Left lung (tissue), 14 donors: ENCODE measurements at regions of chr1 and their contacts with region 1.

Region 1: DNA sequence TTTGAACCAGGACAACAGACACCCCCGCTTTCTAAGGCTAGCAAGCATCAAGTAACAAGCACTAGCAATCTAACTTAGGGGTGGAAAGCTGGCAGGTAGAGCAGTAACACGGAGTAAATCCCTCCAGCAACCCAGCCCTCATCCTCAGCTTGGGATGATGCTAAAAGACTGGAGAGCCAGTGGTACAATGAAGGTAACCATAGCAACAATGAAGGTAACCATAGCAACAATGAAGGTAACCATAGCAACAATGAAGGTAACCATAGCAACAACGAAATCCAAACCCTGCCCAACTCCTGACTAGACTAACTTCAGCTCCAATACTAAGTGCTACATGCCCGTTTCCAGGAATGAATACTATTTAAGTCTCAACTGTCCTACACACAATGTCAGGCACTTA is 22.2 kb upstream of the EIF4G3 start:
- DNase-seq: no peak
- ATAC-seq: no peak
- H3K4me3 ChIP-seq: no peak overlapping the region
- H3K27ac ChIP-seq: no peak overlapping the region
- H3K4me1 ChIP-seq: peaks cover 0 to 3% of the 10 kb centered on the region in 2 donors
- H3K27me3 ChIP-seq: no peaks in the 10 kb centered on the region
- CTCF ChIP-seq: no peak

Region 2: DNA sequence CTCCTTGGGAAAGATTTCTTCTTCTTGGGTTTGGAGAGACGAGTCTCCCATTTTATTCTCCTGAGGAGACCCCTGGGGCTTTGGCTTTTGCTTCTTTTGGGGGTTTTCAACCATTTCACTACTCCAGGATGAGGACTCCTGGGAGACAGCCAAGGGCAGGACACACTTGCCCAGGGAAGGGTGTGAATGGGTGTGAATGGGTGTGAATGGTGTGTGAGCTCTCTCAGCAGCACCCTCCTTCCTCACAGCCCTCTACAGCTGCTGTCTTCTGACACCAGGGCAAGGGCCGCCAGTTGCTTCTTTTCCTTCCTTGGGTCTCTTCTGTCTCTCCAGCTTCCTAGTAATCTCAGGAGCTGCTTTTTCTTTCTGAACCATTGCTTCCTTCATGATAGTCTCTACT is 505.3 kb before region 1 on chr1:
- intact Hi-C with region 1: loop called in 1 of 2 experiments (anchors 5 kb)
- DNase-seq: no peak
- ATAC-seq: no peak
- H3K4me3 ChIP-seq: no peak overlapping the region
- H3K27ac ChIP-seq: no peak overlapping the region
- H3K4me1 ChIP-seq: peaks cover 3 to 16% of the 10 kb centered on the region in 2 donors
- H3K27me3 ChIP-seq: no peaks in the 10 kb centered on the region
- CTCF ChIP-seq: no peak

Region 3: DNA sequence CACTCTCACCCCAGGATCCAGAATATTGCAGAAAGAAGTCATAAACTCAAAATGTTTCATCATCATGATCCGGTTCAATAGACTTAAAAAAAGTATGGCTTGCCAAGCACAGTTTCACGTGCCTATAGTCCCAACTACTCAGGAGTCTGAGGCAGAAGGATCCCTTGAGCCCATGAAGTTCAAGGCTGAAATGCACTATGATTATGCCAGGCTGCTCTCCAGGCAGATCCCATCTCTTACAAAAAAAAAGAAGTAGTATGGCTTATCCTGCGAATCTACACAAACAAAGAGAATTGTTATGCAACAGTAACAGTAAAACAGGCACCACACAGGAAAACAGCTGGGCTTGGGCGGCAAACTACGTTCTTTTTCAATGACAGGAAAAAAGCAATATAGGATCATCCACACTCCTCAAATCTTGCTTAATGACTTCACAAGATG is 98.4 kb before region 1 on chr1:
- intact Hi-C with region 1: no loop called
- DNase-seq: no peak
- ATAC-seq: peak; percentile 56
- H3K4me3 ChIP-seq: no peak overlapping the region
- H3K27ac ChIP-seq: peak overlapping the region in 1 of 2 donors; percentile 61
- H3K4me1 ChIP-seq: peaks cover 0 to 20% of the 10 kb centered on the region in 2 donors
- H3K27me3 ChIP-seq: no peaks in the 10 kb centered on the region
- CTCF ChIP-seq: no peak

Region 4: GRCh38 chr1:21451212-21451812 is 252.4 kb after region 1 on chr1:
- intact Hi-C with region 1: no loop called
- DNase-seq: no peak
- ATAC-seq: no peak
- H3K4me3 ChIP-seq: no peak overlapping the region
- H3K27ac ChIP-seq: no peak overlapping the region
- H3K4me1 ChIP-seq: peaks cover 0 to 11% of the 10 kb centered on the region in 2 donors
- H3K27me3 ChIP-seq: no peaks in the 10 kb centered on the region
- CTCF ChIP-seq: no peak